GM12878 (cell line): ENCODE measurements at regions of chr9 and their contacts with region 1.

Region 1: DNA sequence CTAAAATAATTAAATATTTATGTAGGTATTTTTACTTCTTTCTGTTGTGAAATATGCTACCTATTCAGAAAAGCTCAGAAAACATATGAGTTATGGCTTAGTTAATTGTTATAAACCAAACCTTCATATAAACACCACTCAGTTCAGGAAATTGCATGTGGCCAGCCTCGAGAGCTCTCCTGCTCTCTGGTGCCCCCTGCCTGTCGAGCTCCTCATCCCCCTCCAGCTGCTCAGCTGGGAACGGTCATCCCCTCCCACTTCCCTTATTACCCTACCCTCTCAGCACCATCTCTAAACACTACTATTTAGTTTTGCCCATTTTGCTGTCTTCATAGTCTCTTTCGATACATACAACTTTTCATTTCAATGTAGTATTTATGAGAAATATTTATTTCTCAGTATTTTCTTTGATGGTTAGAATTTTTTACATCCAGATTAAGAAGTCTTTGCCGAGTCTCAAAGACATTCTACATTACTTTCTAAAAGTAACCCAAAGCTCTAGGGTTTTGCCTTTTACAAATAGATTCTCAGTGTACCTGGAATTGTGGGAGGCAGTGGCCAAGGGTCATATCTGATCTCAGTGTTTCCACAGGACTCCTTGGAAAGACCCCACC is 51.2 kb upstream of the SEMA4D start:
- DNase-seq: peak; percentile 62
- ATAC-seq: peak; percentile 100
- H3K4me3 ChIP-seq: no peak overlapping the region
- H3K27ac ChIP-seq: no peak overlapping the region
- H3K4me1 ChIP-seq: peaks cover 10% of the 10 kb centered on the region
- H3K27me3 ChIP-seq: no peaks in the 10 kb centered on the region
- CTCF ChIP-seq: peak; percentile 91 to 95 (median 93)
- EP300 ChIP-seq: no peak
- POLR2A ChIP-seq: no peak
- RAD21 ChIP-seq: peak; percentile 92

Region 2: GRCh38 chr9:89358985-89359384 is 190.2 kb before region 1 on chr9:
- CTCF ChIA-PET with region 1: interaction called, 12 read pairs
- POLR2A ChIA-PET with region 1: no interaction called
- RAD21 ChIA-PET with region 1: interaction called, 6 read pairs
- SMC1A ChIA-PET with region 1: no interaction called
- in situ Hi-C with region 1: no loop called
- intact Hi-C with region 1: no loop called
- DNase-seq: no peak
- ATAC-seq: peak; percentile 30; the same call in 1 of the 3 replicates
- H3K4me3 ChIP-seq: no peak overlapping the region
- H3K27ac ChIP-seq: no peak overlapping the region
- H3K4me1 ChIP-seq: no peaks in the 10 kb centered on the region
- H3K27me3 ChIP-seq: no peaks in the 10 kb centered on the region
- CTCF ChIP-seq: no peak
- EP300 ChIP-seq: no peak
- POLR2A ChIP-seq: no peak
- RAD21 ChIP-seq: no peak

Region 3: GRCh38 chr9:89418882-89419640 is 130.1 kb before region 1 on chr9:
- CTCF ChIA-PET with region 1: interaction called, 207 read pairs
- POLR2A ChIA-PET with region 1: interaction called, 13 read pairs
- RAD21 ChIA-PET with region 1: interaction called, 119 read pairs
- SMC1A ChIA-PET with region 1: interaction called, 31 read pairs
- in situ Hi-C with region 1: no loop called
- intact Hi-C with region 1: no loop called
- DNase-seq: no peak
- ATAC-seq: peak; percentile 87
- H3K4me3 ChIP-seq: peak overlapping the region; percentile 62; the same call in 1 of the 2 replicates
- H3K27ac ChIP-seq: peak overlapping the region; percentile 97
- H3K4me1 ChIP-seq: peaks cover 67% of the 10 kb centered on the region
- H3K27me3 ChIP-seq: no peaks in the 10 kb centered on the region
- CTCF ChIP-seq: no peak
- EP300 ChIP-seq: no peak
- POLR2A ChIP-seq: peak; percentile 51
- RAD21 ChIP-seq: no peak

Region 4: GRCh38 chr9:89448381-89448780 is 100.8 kb before region 1 on chr9:
- CTCF ChIA-PET with region 1: interaction called, 9 read pairs
- POLR2A ChIA-PET with region 1: no interaction called
- RAD21 ChIA-PET with region 1: interaction called, 16 read pairs
- SMC1A ChIA-PET with region 1: interaction called, 32 read pairs
- in situ Hi-C with region 1: no loop called
- intact Hi-C with region 1: no loop called
- DNase-seq: no peak
- ATAC-seq: peak; percentile 71
- H3K4me3 ChIP-seq: no peak overlapping the region
- H3K27ac ChIP-seq: no peak overlapping the region; the same call in 1 of the 2 replicates
- H3K4me1 ChIP-seq: peaks cover 20% of the 10 kb centered on the region
- H3K27me3 ChIP-seq: no peaks in the 10 kb centered on the region
- CTCF ChIP-seq: no peak
- EP300 ChIP-seq: no peak
- POLR2A ChIP-seq: peak; percentile 10; the same call in 1 of the 2 replicates
- RAD21 ChIP-seq: no peak

Region 5: GRCh38 chr9:89489548-89490530 is 59.3 kb before region 1 on chr9:
- CTCF ChIA-PET with region 1: interaction called, 22 read pairs
- POLR2A ChIA-PET with region 1: interaction called, 3 read pairs
- RAD21 ChIA-PET with region 1: interaction called, 18 read pairs
- SMC1A ChIA-PET with region 1: interaction called, 26 read pairs
- in situ Hi-C with region 1: no loop called
- intact Hi-C with region 1: no loop called
- DNase-seq: no peak
- ATAC-seq: peak; percentile 37
- H3K4me3 ChIP-seq: peak overlapping the region; percentile 9; the same call in 1 of the 2 replicates
- H3K27ac ChIP-seq: peak overlapping the region; percentile 30
- H3K4me1 ChIP-seq: peaks cover 51% of the 10 kb centered on the region
- H3K27me3 ChIP-seq: no peaks in the 10 kb centered on the region
- CTCF ChIP-seq: no peak
- EP300 ChIP-seq: no peak
- POLR2A ChIP-seq: no peak
- RAD21 ChIP-seq: no peak

Region 6: DNA sequence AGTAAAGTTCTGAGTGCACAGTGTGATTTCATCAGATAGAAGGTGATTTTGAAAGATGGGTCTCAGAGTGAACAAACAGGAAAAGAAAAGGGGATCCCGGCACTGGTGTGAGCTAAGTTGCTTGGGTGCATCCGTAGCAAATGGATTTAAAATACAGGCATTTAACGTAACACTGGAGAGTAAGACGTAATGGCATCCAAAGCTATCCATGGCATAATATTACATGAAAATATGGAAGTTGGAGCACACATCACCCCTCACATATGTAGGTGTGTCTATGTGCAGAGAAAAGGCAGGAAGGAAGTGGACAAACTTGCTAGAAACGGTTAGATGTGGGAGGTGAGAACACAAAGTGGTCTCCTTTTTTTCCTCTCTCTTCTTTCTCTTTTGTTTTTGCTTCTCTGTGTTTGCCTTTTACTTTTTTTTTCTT is 13.0 kb before region 1 on chr9:
- CTCF ChIA-PET with region 1: interaction called, 23 read pairs
- POLR2A ChIA-PET with region 1: interaction called, 5 read pairs
- RAD21 ChIA-PET with region 1: interaction called, 17 read pairs
- SMC1A ChIA-PET with region 1: interaction called, 19 read pairs
- in situ Hi-C with region 1: no loop called
- intact Hi-C with region 1: no loop called
- DNase-seq: no peak
- ATAC-seq: peak; percentile 72
- H3K4me3 ChIP-seq: no peak overlapping the region
- H3K27ac ChIP-seq: peak overlapping the region; percentile 40
- H3K4me1 ChIP-seq: peaks cover 21% of the 10 kb centered on the region
- H3K27me3 ChIP-seq: no peaks in the 10 kb centered on the region
- CTCF ChIP-seq: no peak
- EP300 ChIP-seq: no peak
- POLR2A ChIP-seq: no peak
- RAD21 ChIP-seq: no peak

Region 7: DNA sequence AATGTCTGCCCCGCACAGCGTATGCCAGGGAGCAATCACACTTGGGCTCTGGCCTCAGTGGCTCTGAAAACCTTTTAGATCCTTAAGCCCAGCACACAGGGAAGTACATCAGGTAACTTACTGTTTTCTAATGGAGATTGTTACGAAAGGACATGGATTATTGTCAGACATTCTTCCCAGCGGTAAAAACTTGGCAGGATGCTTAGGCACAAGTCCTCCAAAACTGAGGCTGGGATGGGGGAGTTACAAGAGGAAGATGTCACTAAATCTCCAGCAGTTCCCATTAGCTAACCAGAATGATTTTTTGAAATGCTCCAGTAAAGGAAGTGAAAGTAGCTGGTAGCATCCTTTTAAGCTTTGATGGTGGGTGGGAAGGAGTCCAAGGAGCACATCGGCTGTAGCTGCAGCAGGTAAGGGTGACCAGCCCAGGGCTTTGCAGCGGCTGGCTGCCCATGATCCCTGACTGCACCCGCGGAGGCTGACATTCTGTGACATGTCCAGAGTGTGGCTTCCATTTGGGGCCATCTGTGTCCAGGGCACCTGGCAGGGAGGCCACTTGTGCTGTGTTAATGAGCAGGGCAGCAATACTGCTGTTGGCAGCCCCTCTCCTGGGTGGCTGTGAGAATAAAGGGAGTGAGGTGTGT is 221.5 kb after region 1 on chr9:
- CTCF ChIA-PET with region 1: no interaction called
- POLR2A ChIA-PET with region 1: no interaction called
- RAD21 ChIA-PET with region 1: no interaction called
- SMC1A ChIA-PET with region 1: no interaction called
- in situ Hi-C with region 1: no loop called
- intact Hi-C with region 1: no loop called
- DNase-seq: no peak
- ATAC-seq: peak; percentile 39
- H3K4me3 ChIP-seq: no peak overlapping the region
- H3K27ac ChIP-seq: no peak overlapping the region
- H3K4me1 ChIP-seq: no peaks in the 10 kb centered on the region
- H3K27me3 ChIP-seq: no peaks in the 10 kb centered on the region
- CTCF ChIP-seq: no peak
- EP300 ChIP-seq: no peak
- POLR2A ChIP-seq: no peak
- RAD21 ChIP-seq: no peak